ENCODE measurements at regions of chrX and their contacts with region 1.

Region 1: GRCh38 chrX:78945186-78945912 is at the start of gene P2RY10:
- DNase-seq: peak; percentile 70 to 80 (median 74)
- H3K4me3 ChIP-seq: peak within 1 kb of the TSS; percentile 59 to 86
- H3K4me3 Mint-ChIP-seq: peak within 1 kb of the TSS; percentile 87 to 99 (median 96)
- H3K27ac ChIP-seq: peak within 1 kb of the TSS; percentile 68
- H3K27ac Mint-ChIP-seq: peak within 1 kb of the TSS; percentile 95 to 100 (median 97)
- H3K4me1 ChIP-seq: peaks cover 45% of the 10 kb centered on the region
- H3K4me1 Mint-ChIP-seq: peaks cover 22 to 69% (median 36%) of the 10 kb centered on the region in 4 donors
- H3K27me3 ChIP-seq: no peaks in the 10 kb centered on the region
- H3K27me3 Mint-ChIP-seq: no peaks in the 10 kb centered on the region
- total RNA-seq, gene P2RY10: 87.4 to 104 TPM

Region 2: GRCh38 chrX:77899081-77899828 is 1046.1 kb before region 1 on chrX and contains the start of gene COX7B:
- CTCF ChIA-PET with region 1: no interaction called
- POLR2A ChIA-PET with region 1: no interaction called
- intact Hi-C with region 1: loop called (anchors 10 kb)
- DNase-seq: peak; percentile 82 to 91 (median 88)
- H3K4me3 ChIP-seq: peak within 1 kb of the TSS; percentile 42 to 76
- H3K4me3 Mint-ChIP-seq: peak within 1 kb of the TSS; percentile 84 to 96 (median 91)
- H3K27ac ChIP-seq: peak within 1 kb of the TSS; percentile 81
- H3K27ac Mint-ChIP-seq: peak within 1 kb of the TSS; percentile 88 to 99 (median 95)
- H3K4me1 ChIP-seq: peaks cover 25% of the 10 kb centered on the region
- H3K4me1 Mint-ChIP-seq: peaks cover 7 to 49% (median 20%) of the 10 kb centered on the region in 4 donors
- H3K27me3 ChIP-seq: no peaks in the 10 kb centered on the region
- H3K27me3 Mint-ChIP-seq: no peaks in the 10 kb centered on the region
- total RNA-seq, gene COX7B: 115 to 126 TPM

Region 3: DNA sequence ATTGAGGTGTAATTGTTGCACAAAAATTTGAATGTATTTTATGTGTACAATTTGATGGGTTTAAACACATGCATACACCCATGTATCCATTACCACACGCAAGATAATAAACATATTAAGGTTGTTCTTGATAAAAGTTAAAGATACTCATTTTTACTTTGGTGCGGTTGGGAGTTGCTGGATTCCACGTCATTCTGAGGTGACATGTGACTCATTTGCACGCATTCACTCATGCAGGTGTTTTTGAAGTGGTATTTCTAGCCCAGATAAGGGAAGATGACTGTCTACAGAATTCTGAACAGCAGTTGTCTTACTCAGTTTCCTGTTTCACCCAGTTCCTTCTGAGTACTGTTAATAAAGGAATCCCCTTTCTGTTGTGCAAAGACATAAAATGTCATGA is 428.2 kb before region 1 on chrX:
- CTCF ChIA-PET with region 1: no interaction called
- POLR2A ChIA-PET with region 1: no interaction called
- intact Hi-C with region 1: loop called (anchors 2 kb)
- DNase-seq: peak; percentile 81 to 90 (median 87)
- H3K4me3 ChIP-seq: no peak overlapping the region
- H3K4me3 Mint-ChIP-seq: peak overlapping the region in 7 of 8 donors; percentile 45 to 78 (median 61)
- H3K27ac ChIP-seq: peak overlapping the region; percentile 48
- H3K27ac Mint-ChIP-seq: peak overlapping the region; percentile 83 to 98 (median 95)
- H3K4me1 ChIP-seq: peaks cover 42% of the 10 kb centered on the region
- H3K4me1 Mint-ChIP-seq: peaks cover 21 to 46% (median 35%) of the 10 kb centered on the region in 4 donors
- H3K27me3 ChIP-seq: no peaks in the 10 kb centered on the region
- H3K27me3 Mint-ChIP-seq: no peaks in the 10 kb centered on the region

Region 4: DNA sequence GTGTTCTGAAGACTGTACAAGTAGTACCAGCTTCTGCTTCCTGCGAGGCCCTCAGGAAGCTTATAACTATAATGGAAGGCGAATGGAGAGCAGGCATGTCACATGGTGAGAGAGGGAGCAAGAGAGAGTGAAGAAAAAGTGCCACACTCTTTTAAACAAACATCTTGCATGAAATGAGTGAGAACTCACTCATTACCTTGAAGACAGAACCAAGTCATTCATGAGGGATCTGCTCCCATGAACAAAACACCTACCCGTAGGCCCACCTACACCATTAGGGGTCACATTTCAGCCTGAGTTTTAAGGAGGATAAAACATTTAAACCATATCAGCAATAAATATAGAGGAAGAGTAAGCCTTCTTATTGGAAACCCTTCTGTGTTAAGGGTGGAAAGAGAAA is 19.2 kb after region 1 on chrX:
- CTCF ChIA-PET with region 1: no interaction called
- POLR2A ChIA-PET with region 1: interaction called, 26 read pairs
- intact Hi-C with region 1: loop called (anchors 2 kb)
- DNase-seq: no peak
- H3K4me3 ChIP-seq: no peak overlapping the region
- H3K4me3 Mint-ChIP-seq: peak overlapping the region in 1 of 8 donors; percentile 50
- H3K27ac ChIP-seq: no peak overlapping the region
- H3K27ac Mint-ChIP-seq: peak overlapping the region in 6 of 7 donors; percentile 52 to 85 (median 78)
- H3K4me1 ChIP-seq: peaks cover 21% of the 10 kb centered on the region
- H3K4me1 Mint-ChIP-seq: peaks cover 13 to 42% (median 25%) of the 10 kb centered on the region in 4 donors
- H3K27me3 ChIP-seq: no peaks in the 10 kb centered on the region
- H3K27me3 Mint-ChIP-seq: no peaks in the 10 kb centered on the region

Region 5: DNA sequence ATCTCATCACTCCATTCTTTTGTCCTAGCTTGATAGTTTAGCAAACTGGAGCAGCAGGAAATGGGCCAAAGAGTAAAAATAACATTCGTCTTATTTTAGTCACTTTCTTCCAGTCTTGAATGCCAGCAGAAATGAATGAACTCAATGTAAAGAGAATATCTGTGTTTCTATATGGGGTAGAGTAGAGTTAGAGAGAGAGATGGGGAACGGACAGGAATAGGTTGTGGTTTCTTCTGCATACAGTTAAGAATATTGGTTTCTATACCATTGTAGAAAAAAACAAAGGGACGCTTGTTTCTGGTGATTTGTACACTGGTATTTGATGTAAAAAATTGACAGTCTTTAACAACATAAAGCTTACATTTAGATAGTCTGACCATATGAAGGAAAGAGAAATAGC is 208.0 kb after region 1 on chrX:
- CTCF ChIA-PET with region 1: no interaction called
- POLR2A ChIA-PET with region 1: interaction called, 12 read pairs
- intact Hi-C with region 1: no loop called
- DNase-seq: no peak
- H3K4me3 ChIP-seq: peak overlapping the region; percentile 34 to 42
- H3K4me3 Mint-ChIP-seq: peak overlapping the region; percentile 57 to 93 (median 84)
- H3K27ac ChIP-seq: peak overlapping the region; percentile 71
- H3K27ac Mint-ChIP-seq: peak overlapping the region; percentile 83 to 97 (median 93)
- H3K4me1 ChIP-seq: peaks cover 94% of the 10 kb centered on the region
- H3K4me1 Mint-ChIP-seq: peaks cover 34 to 81% (median 42%) of the 10 kb centered on the region in 4 donors
- H3K27me3 ChIP-seq: no peaks in the 10 kb centered on the region
- H3K27me3 Mint-ChIP-seq: no peaks in the 10 kb centered on the region

Region 6: DNA sequence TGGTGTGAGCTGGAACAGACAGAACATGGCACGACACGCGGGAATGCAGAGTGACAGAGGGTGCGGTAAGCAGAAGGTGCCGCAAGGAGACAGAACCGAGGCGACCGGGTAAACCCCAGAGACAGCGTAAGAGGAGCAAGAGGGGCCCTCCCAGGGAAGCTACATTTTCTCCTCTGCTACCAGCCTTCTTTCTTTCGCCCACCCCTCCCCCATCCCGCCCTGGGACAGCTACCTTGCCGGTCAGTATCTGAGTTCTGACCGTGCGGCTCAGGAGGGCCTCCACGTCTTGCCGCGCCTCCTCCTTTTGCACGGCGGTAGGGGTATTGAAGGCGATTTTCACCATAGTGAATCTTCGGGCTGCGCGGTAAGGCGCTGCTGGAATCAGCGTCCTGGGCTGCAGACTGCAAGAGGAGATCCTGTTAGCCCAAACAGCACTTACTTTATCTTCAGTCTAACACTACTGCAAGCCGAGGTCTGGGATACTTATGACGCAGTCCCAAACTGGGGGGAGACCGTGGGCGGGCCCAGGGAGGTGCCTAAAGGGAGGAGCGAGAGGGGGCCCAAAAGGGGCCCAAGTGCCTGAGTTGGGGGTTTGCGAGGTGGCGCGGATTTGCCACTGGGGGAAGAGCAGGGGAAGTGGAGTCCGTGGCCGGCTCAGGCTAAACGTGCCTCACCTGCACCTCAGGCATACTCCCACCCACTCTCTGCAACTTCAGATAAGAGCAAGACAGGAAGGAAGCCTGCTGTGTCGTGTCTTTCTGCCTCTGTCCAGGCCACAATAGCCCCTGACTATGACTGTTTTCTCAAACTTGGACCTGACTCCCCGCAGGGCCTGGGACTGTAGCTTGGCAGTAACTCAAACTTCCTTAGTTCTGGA is 421.8 kb after region 1 on chrX and contains the start of gene ITM2A:
- CTCF ChIA-PET with region 1: no interaction called
- POLR2A ChIA-PET with region 1: interaction called, 17 read pairs
- intact Hi-C with region 1: no loop called
- DNase-seq: peak; percentile 64 to 79 (median 71)
- H3K4me3 ChIP-seq: peak within 1 kb of the TSS; percentile 65 to 84
- H3K4me3 Mint-ChIP-seq: peak within 1 kb of the TSS; percentile 91 to 99 (median 94)
- H3K27ac ChIP-seq: peak within 1 kb of the TSS; percentile 95
- H3K27ac Mint-ChIP-seq: peak within 1 kb of the TSS; percentile 97 to 99 (median 97)
- H3K4me1 ChIP-seq: peaks cover 27% of the 10 kb centered on the region
- H3K4me1 Mint-ChIP-seq: peaks cover 17 to 27% (median 22%) of the 10 kb centered on the region in 4 donors
- H3K27me3 ChIP-seq: no peaks in the 10 kb centered on the region
- H3K27me3 Mint-ChIP-seq: no peaks in the 10 kb centered on the region
- total RNA-seq, gene ITM2A: 147 to 169 TPM

Measured in CD4-positive, alpha-beta memory T cell (primary cell).